GM12878 (cell line): ENCODE measurements at regions of chr16 and their contacts with region 1.

Region 1: GRCh38 chr16:85502357-85502756 is 110.8 kb upstream of the GSE1 start:
- DNase-seq: no peak
- ATAC-seq: no peak
- H3K4me3 ChIP-seq: no peak overlapping the region
- H3K27ac ChIP-seq: no peak overlapping the region
- H3K4me1 ChIP-seq: no peaks in the 10 kb centered on the region
- H3K27me3 ChIP-seq: peaks cover 0 to 3% of the 10 kb centered on the region in 2 experiments; a peak in 2 of 4 replicates
- CTCF ChIP-seq: no peak
- EP300 ChIP-seq: no peak
- POLR2A ChIP-seq: no peak
- RAD21 ChIP-seq: no peak

Region 2: DNA sequence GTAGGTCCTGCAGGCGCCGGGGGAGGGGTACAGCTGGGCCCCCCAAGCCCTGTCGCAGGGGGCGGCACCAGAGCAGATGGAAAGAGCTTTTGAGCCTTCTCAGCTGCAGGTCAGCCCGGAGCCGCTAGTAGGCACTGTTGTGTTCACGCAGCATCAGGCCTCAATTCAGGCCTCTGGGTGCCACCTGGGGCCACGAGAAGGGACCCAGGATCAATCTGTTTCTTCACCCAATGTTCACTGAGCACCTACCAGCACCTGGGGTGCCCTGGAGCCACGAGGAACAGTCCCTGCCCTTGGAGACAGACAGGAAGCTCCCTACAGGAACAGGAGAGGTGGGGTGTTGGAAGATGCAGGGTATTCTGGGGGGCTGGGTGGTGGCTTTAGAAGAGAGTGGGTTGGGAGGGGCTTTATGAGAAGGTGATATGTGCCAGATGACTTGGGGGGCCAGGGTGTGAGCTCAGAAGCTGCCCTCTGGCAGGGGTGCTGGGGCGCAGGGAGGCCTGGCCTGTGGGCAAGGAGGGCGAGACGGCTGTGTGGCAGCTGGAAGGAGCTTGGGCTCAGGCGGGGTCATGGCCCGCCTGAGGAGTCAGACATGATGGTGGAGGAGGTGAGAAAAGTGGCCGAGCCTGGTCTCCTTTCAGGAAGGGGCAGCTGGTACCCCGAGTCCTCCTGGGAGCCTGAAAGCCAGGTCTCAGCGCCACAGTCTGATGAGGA is 11.1 kb before region 1 on chr16:
- CTCF ChIA-PET with region 1: interaction called, 13 read pairs
- POLR2A ChIA-PET with region 1: no interaction called
- RAD21 ChIA-PET with region 1: no interaction called
- SMC1A ChIA-PET with region 1: no interaction called
- in situ Hi-C with region 1: no loop called
- intact Hi-C with region 1: no loop called
- DNase-seq: no peak
- ATAC-seq: peak; percentile 86
- H3K4me3 ChIP-seq: no peak overlapping the region
- H3K27ac ChIP-seq: no peak overlapping the region
- H3K4me1 ChIP-seq: peaks cover 3% of the 10 kb centered on the region; the same call in 1 of the 2 replicates
- H3K27me3 ChIP-seq: peaks cover 0 to 2% of the 10 kb centered on the region in 2 experiments; a peak in 1 of 4 replicates
- CTCF ChIP-seq: peak; percentile 72 to 98 (median 98)
- EP300 ChIP-seq: no peak
- POLR2A ChIP-seq: no peak
- RAD21 ChIP-seq: peak; percentile 67

Region 3: GRCh38 chr16:85514595-85515318 is 12.4 kb after region 1 on chr16:
- CTCF ChIA-PET with region 1: no interaction called
- POLR2A ChIA-PET with region 1: no interaction called
- RAD21 ChIA-PET with region 1: no interaction called
- SMC1A ChIA-PET with region 1: no interaction called
- in situ Hi-C with region 1: no loop called
- intact Hi-C with region 1: no loop called
- DNase-seq: no peak
- ATAC-seq: no peak
- H3K4me3 ChIP-seq: no peak overlapping the region
- H3K27ac ChIP-seq: no peak overlapping the region
- H3K4me1 ChIP-seq: no peaks in the 10 kb centered on the region
- H3K27me3 ChIP-seq: peaks cover 0 to 3% of the 10 kb centered on the region in 2 experiments; a peak in 2 of 4 replicates
- CTCF ChIP-seq: no peak
- EP300 ChIP-seq: no peak
- POLR2A ChIP-seq: no peak
- RAD21 ChIP-seq: no peak